AG04449 (cell line): ENCODE measurements at regions of chr5 and their contacts with region 1.

Region 1: GRCh38 chr5:150523472-150524350 is 15.8 kb downstream of the NDST1 start:
- DNase-seq: no peak
- H3K4me3 ChIP-seq: no peak overlapping the region
- CTCF ChIP-seq: peak; percentile 69

Region 2: GRCh38 chr5:150464554-150465012 is 59.1 kb before region 1 on chr5:
- CTCF ChIA-PET with region 1: interaction called, 124 read pairs
- POLR2A ChIA-PET with region 1: no interaction called
- DNase-seq: no peak
- H3K4me3 ChIP-seq: no peak overlapping the region
- CTCF ChIP-seq: no peak

Region 3: GRCh38 chr5:150553402-150553801 is 29.7 kb after region 1 on chr5:
- CTCF ChIA-PET with region 1: no interaction called
- POLR2A ChIA-PET with region 1: no interaction called
- DNase-seq: no peak
- H3K4me3 ChIP-seq: no peak overlapping the region
- CTCF ChIP-seq: no peak

Region 4: GRCh38 chr5:150734579-150735384 is 211.1 kb after region 1 on chr5:
- CTCF ChIA-PET with region 1: no interaction called
- POLR2A ChIA-PET with region 1: no interaction called
- DNase-seq: no peak
- H3K4me3 ChIP-seq: no peak overlapping the region
- CTCF ChIP-seq: no peak

Region 5: GRCh38 chr5:150778517-150779396 is 255.0 kb after region 1 on chr5 and contains the start of gene SMIM3:
- CTCF ChIA-PET with region 1: no interaction called
- POLR2A ChIA-PET with region 1: no interaction called
- DNase-seq: no peak
- H3K4me3 ChIP-seq: peak within 1 kb of the TSS; percentile 91
- CTCF ChIP-seq: peak; percentile 56